Heart right ventricle (tissue), 16 donors: ENCODE measurements at regions of chr12 and their contacts with region 1.

Region 1: DNA sequence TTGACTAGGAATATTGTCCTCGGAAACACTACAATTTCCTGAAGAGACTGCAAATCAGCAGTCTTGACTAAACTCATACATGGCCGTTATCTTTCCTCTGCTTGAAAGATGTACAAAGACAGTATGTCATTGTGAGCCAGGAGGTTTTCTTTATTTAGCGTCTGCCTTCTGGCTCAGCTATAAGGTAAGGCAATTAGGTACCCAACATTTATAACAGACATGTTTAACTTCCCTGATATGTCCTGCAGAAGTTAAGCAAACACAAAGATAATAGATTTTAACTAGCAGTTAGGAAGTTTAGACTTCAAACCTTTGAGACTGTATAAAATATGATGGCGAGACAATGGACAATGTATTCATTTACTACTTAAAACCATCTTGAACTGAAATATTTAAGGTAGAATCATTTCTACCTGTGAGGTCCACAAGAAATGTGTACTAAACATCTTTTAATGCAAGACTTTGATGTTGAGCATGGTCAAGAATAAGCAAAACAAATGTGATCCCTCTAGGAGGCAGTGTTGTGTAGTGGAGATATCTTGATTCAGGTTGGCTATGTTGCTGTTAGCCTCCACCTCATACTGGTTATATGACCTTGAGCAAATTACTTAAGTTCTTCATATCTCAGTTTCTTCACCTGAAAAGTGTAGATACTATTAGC is 96.2 kb upstream of the EEA1 start:
- DNase-seq: peak in 1 of 2 donors; percentile 28
- ATAC-seq: peak in 4 of 8 donors; percentile 55 to 62 (median 59)
- H3K4me3 ChIP-seq: no peak overlapping the region
- H3K27ac ChIP-seq: peak overlapping the region in 2 of 10 donors; percentile 23 to 37
- H3K4me1 ChIP-seq: peaks cover 0 to 25% (median 6%) of the 10 kb centered on the region in 9 donors
- H3K27me3 ChIP-seq: no peaks in the 10 kb centered on the region
- CTCF ChIP-seq: peak in 8 of 9 donors; percentile 33 to 67 (median 61)

Region 2: GRCh38 chr12:92582475-92582874 is 442.8 kb before region 1 on chr12:
- intact Hi-C with region 1: no loop called
- DNase-seq: no peak
- ATAC-seq: no peak
- H3K4me3 ChIP-seq: no peak overlapping the region
- H3K27ac ChIP-seq: no peak overlapping the region
- H3K4me1 ChIP-seq: no peaks in the 10 kb centered on the region
- H3K27me3 ChIP-seq: no peaks in the 10 kb centered on the region
- CTCF ChIP-seq: no peak

Region 3: DNA sequence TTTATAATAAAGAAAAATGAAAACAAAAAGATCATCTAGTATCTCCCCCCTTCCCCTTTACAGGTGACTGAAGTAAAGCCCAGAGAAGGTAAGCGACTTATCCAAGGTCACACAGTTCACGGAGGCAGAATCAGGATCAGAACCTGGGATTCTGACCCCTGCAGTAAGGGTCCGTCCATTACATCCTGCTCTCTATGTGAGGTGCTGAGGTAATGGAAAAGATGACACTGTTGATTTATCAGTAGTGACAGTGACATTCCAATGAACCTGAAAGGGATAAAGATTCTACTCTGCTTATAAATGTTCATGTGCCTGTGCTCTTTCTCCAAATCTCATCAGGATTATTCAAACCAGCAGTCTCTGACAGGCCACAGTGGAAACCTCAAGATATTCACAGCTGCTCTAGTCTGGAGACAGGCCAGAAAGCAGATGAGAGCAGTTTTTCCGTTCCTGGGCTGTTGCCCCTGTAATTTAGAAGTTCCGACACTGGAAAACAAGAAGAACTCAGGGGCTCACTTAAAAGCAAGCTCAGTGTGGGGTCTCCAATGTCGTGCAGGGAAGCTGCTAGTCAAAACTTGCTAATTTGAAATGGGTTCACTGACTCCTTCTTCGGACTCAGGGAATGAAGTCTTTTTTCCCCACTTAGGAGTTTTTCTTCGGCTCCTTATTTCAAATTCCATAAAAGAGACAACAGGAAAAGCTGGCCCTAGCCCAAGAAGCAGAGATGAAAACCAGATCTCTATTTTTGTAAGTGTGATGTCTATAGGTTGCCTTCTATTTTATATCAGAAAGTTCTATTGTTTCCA is 35.6 kb after region 1 on chr12:
- intact Hi-C with region 1: loop called in 1 of 10 experiments (anchors 2 kb)
- DNase-seq: peak in 1 of 2 donors; percentile 61
- ATAC-seq: peak; percentile 15 to 79 (median 74)
- H3K4me3 ChIP-seq: peak overlapping the region in 4 of 10 donors; percentile 4 to 13 (median 9)
- H3K27ac ChIP-seq: peak overlapping the region; percentile 61 to 88 (median 78)
- H3K4me1 ChIP-seq: peaks cover 14 to 36% (median 26%) of the 10 kb centered on the region in 9 donors
- H3K27me3 ChIP-seq: no peaks in the 10 kb centered on the region
- CTCF ChIP-seq: peak in 5 of 9 donors; percentile 12 to 33 (median 18)

Region 4: GRCh38 chr12:93127582-93128331 is 102.5 kb after region 1 on chr12:
- intact Hi-C with region 1: loop called in 2 of 10 experiments (anchors 2 to 5 kb)
- DNase-seq: peak; percentile 72 to 82
- ATAC-seq: peak; percentile 85 to 96 (median 92)
- H3K4me3 ChIP-seq: peak overlapping the region in 2 of 10 donors; percentile 2 to 3
- H3K27ac ChIP-seq: peak overlapping the region; percentile 74 to 89 (median 79)
- H3K4me1 ChIP-seq: peaks cover 2 to 45% (median 12%) of the 10 kb centered on the region in 9 donors
- H3K27me3 ChIP-seq: no peaks in the 10 kb centered on the region
- CTCF ChIP-seq: peak in 8 of 9 donors; percentile 15 to 49 (median 42)

Region 5: GRCh38 chr12:93378373-93379325 is 353.4 kb after region 1 on chr12:
- intact Hi-C with region 1: loop called in 2 of 10 experiments (anchors 5 to 10 kb)
- DNase-seq: peak in 1 of 2 donors; percentile 36
- ATAC-seq: peak in 6 of 8 donors; percentile 1 to 10 (median 6)
- H3K4me3 ChIP-seq: peak overlapping the region; percentile 77 to 93 (median 84)
- H3K27ac ChIP-seq: peak overlapping the region; percentile 85 to 97 (median 94)
- H3K4me1 ChIP-seq: peaks cover 0 to 75% (median 44%) of the 10 kb centered on the region in 9 donors
- H3K27me3 ChIP-seq: no peaks in the 10 kb centered on the region
- CTCF ChIP-seq: no peak

Region 6: GRCh38 chr12:93397412-93397811 is 372.1 kb after region 1 on chr12:
- intact Hi-C with region 1: loop called in 4 of 10 experiments (anchors 5 to 10 kb)
- DNase-seq: no peak
- ATAC-seq: no peak
- H3K4me3 ChIP-seq: no peak overlapping the region
- H3K27ac ChIP-seq: peak overlapping the region in 1 of 10 donors; percentile 59
- H3K4me1 ChIP-seq: peaks cover 0 to 23% (median 17%) of the 10 kb centered on the region in 9 donors
- H3K27me3 ChIP-seq: no peaks in the 10 kb centered on the region
- CTCF ChIP-seq: no peak